ENCODE measurements at regions of chr7 and their contacts with region 1.

Region 1: DNA sequence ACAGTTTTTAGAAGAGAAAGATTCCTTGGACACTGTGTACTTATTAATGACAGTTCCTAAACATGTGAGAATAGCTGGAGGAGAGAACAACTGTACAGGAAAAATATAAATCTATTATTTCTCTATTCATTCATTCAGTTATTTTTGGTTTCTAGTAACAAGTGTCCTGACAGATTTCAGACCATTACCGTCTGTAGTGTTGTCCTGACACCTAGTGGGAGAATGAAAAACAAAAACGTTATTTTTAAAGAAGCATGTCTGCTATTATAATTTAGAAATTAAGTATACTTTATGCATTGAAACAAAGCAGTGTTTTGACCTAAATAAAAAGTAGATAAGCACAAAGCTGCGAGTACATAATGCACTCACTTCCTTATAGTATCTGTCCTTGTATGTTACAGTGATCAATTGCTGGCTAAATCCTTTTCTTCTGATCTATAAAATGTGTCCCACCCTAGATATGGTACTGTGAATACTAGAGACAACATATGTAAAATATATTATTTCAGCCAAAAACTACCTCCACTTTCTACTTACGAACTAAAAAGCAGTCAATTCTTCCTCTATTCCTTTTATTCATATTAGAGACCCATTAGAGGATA is 575.6 kb downstream of the ARL4A start:
- DNase-seq: peak; percentile 13 to 56 (median 20)
- ATAC-seq: peak; percentile 82
- H3K4me3 ChIP-seq: no peak overlapping the region
- H3K27ac ChIP-seq: no peak overlapping the region
- H3K4me1 ChIP-seq: peaks cover 0 to 6% of the 10 kb centered on the region in 2 experiments; a peak in 2 of 5 replicates
- H3K27me3 ChIP-seq: no peaks in the 10 kb centered on the region
- CTCF ChIP-seq: peak in 2 of 3 experiments; percentile 55 to 74; a peak in 3 of 6 replicates
- EP300 ChIP-seq: no peak
- POLR2A ChIP-seq: no peak
- RAD21 ChIP-seq: peak; percentile 97 to 98

Region 2: DNA sequence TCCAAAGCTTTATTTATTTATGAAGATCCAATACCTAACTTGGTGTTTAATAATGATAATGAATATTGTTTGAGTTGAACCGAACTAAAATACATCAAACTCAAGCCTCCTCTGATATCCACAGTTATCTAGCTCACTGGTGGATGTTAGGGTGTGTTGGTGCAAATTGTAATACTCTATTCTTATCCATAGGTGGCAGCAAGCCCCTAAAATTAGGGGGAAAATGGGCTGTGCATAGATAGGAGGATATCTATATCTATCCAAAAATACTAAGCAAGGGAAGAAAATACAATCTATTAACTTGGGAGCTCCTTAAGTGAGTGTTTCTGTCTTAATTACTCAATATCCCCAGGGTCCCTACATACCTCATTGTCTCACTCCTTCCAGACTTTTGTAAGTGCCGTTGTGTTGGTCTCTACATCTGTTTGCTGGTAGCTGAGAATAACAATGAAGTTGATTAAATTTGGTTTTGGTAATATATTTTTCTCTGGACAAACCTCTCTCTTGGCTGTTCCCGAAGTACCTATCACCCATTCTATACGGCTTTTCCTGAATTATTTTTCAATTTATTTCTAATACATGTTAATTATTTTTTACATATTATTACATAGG is 804.4 kb before region 1 on chr7:
- CTCF ChIA-PET with region 1: no interaction called
- POLR2A ChIA-PET with region 1: no interaction called
- in situ Hi-C with region 1: no loop called
- intact Hi-C with region 1: loop called (anchors 5 kb)
- DNase-seq: peak; percentile 40 to 71 (median 56)
- ATAC-seq: peak; percentile 99
- H3K4me3 ChIP-seq: no peak overlapping the region
- H3K27ac ChIP-seq: no peak overlapping the region
- H3K4me1 ChIP-seq: no peaks in the 10 kb centered on the region
- H3K27me3 ChIP-seq: no peaks in the 10 kb centered on the region
- CTCF ChIP-seq: peak; percentile 74 to 89 (median 78)
- EP300 ChIP-seq: no peak
- POLR2A ChIP-seq: no peak
- RAD21 ChIP-seq: peak; percentile 79 to 93

Region 3: DNA sequence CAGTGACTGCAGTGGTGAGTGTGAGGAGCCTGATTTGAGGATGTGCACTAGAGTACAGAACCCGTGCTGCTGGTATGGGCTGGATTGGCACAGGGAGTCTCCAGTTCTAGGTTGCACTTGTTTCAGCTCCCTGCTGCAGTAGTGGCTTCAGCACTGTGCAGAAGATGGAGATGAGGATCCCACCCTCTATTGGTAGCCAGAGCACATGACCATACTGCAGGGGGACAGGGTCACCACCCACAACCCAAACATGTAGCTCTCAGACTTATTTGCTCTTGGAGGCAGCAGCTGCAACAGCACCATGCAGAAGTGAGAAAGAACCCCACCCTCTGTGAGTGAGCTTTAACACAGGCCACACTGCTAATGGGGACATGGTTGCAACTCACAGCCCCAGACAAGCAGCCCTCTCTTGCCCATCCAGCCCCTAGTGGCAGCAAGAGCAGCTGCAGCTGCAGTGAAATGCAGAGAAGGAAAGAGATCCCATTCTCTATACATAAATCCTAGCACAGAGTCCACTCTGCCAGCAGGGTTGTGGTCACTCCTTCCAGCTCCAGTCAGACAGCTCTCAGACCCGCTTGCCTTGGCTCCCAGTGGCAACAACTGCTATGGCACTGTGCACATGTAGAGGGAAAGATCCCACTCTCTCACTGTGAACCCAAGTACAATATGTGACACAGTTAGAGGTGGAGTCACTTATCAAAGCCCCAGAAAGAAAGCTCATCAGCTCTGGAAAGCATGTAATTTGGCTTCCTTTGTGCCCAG is 743.9 kb before region 1 on chr7:
- CTCF ChIA-PET with region 1: interaction called, 24 read pairs
- POLR2A ChIA-PET with region 1: no interaction called
- in situ Hi-C with region 1: loop called (anchors 5 kb)
- intact Hi-C with region 1: no loop called
- DNase-seq: peak; percentile 17 to 37 (median 22)
- ATAC-seq: peak; percentile 95
- H3K4me3 ChIP-seq: no peak overlapping the region
- H3K27ac ChIP-seq: no peak overlapping the region
- H3K4me1 ChIP-seq: no peaks in the 10 kb centered on the region
- H3K27me3 ChIP-seq: no peaks in the 10 kb centered on the region
- CTCF ChIP-seq: peak; percentile 46 to 63 (median 58)
- EP300 ChIP-seq: no peak
- POLR2A ChIP-seq: no peak
- RAD21 ChIP-seq: no peak

Region 4: GRCh38 chr7:12524794-12525386 is 738.1 kb before region 1 on chr7:
- CTCF ChIA-PET with region 1: interaction called, 24 read pairs
- POLR2A ChIA-PET with region 1: no interaction called
- in situ Hi-C with region 1: no loop called
- intact Hi-C with region 1: loop called (anchors 1 kb)
- DNase-seq: peak; percentile 20 to 63 (median 34)
- ATAC-seq: peak; percentile 77
- H3K4me3 ChIP-seq: no peak overlapping the region
- H3K27ac ChIP-seq: no peak overlapping the region
- H3K4me1 ChIP-seq: no peaks in the 10 kb centered on the region
- H3K27me3 ChIP-seq: no peaks in the 10 kb centered on the region
- CTCF ChIP-seq: peak; percentile 20 to 81 (median 51); a peak in 3 of 6 replicates
- EP300 ChIP-seq: no peak
- POLR2A ChIP-seq: no peak
- RAD21 ChIP-seq: peak; percentile 91 to 92

Region 5: GRCh38 chr7:12638851-12639467 is 624.1 kb before region 1 on chr7:
- CTCF ChIA-PET with region 1: interaction called, 11 read pairs
- POLR2A ChIA-PET with region 1: no interaction called
- in situ Hi-C with region 1: loop called (anchors 5 kb)
- intact Hi-C with region 1: loop called (anchors 1 kb)
- DNase-seq: peak; percentile 19 to 46 (median 24)
- ATAC-seq: peak; percentile 61
- H3K4me3 ChIP-seq: no peak overlapping the region
- H3K27ac ChIP-seq: no peak overlapping the region
- H3K4me1 ChIP-seq: no peaks in the 10 kb centered on the region; a peak in 4 of 5 replicates
- H3K27me3 ChIP-seq: no peaks in the 10 kb centered on the region
- CTCF ChIP-seq: peak in 2 of 3 experiments; percentile 44 to 78; a peak in 4 of 6 replicates
- EP300 ChIP-seq: no peak
- POLR2A ChIP-seq: no peak
- RAD21 ChIP-seq: peak; percentile 86 to 90

Region 6: DNA sequence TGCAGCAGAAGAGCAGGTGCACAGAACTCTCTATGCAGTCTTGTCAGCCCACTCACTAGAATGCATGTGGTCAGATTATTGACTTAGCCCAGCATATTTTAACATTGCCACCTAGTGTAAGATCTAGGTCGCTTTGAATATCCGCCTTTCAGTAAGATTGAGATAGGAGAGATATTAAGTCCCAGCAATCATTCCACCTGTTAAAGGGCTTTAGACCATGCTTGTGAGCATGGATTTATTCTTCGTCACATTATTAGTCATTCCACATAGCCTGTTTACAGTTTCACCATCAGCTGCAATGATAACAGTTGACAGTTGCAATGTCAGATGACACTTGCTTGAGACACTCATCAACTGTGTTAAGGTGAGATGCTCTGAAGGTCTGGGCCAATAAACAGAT is 83.9 kb before region 1 on chr7:
- CTCF ChIA-PET with region 1: no interaction called
- POLR2A ChIA-PET with region 1: no interaction called
- in situ Hi-C with region 1: no loop called
- intact Hi-C with region 1: loop called (anchors 5 kb)
- DNase-seq: peak in 2 of 4 experiments; percentile 12 to 48
- ATAC-seq: peak; percentile 86
- H3K4me3 ChIP-seq: no peak overlapping the region
- H3K27ac ChIP-seq: no peak overlapping the region
- H3K4me1 ChIP-seq: peaks cover 0 to 2% of the 10 kb centered on the region in 2 experiments; a peak in 1 of 5 replicates
- H3K27me3 ChIP-seq: no peaks in the 10 kb centered on the region
- CTCF ChIP-seq: peak in 2 of 3 experiments; percentile 38 to 51; a peak in 3 of 6 replicates
- EP300 ChIP-seq: no peak
- POLR2A ChIP-seq: no peak
- RAD21 ChIP-seq: peak; percentile 55 to 77

Region 7: DNA sequence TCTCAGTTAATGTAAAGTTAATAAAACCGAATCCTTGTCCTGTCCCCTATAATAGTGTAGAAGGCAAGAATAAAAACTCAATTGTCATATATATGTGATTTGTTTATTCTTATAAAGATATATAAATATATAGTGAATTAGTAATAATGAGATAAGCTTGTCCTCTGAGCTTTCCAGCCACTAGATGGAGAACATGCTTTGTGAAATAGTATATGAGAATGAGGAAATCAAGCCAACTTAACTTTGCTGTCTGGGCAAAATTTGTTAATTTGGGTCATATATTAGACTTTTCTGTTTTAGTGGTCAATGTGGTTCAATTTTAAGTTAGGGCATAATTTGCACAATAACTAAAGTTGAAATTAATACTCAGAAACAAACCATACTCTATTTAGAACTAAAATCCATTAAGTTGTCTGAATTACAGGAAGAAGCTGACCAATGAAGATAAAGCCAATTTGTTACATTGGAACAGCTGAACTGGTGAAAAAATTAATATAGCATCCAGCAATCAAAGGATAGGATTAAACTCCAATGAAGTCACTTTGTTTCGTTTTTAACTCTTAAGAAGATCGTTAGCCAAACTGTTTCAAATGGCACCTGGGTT is 19.4 kb after region 1 on chr7:
- CTCF ChIA-PET with region 1: no interaction called
- POLR2A ChIA-PET with region 1: no interaction called
- in situ Hi-C with region 1: no loop called
- intact Hi-C with region 1: no loop called
- DNase-seq: no peak
- ATAC-seq: no peak
- H3K4me3 ChIP-seq: no peak overlapping the region
- H3K27ac ChIP-seq: no peak overlapping the region
- H3K4me1 ChIP-seq: no peaks in the 10 kb centered on the region
- H3K27me3 ChIP-seq: no peaks in the 10 kb centered on the region
- CTCF ChIP-seq: peak in 2 of 3 experiments; percentile 14 to 49; a peak in 3 of 6 replicates
- EP300 ChIP-seq: no peak
- POLR2A ChIP-seq: no peak
- RAD21 ChIP-seq: peak; percentile 54 to 55

Measured in K562 (cell line).